ENCODE measurements at regions of chr12 and their contacts with region 1.

Region 1: DNA sequence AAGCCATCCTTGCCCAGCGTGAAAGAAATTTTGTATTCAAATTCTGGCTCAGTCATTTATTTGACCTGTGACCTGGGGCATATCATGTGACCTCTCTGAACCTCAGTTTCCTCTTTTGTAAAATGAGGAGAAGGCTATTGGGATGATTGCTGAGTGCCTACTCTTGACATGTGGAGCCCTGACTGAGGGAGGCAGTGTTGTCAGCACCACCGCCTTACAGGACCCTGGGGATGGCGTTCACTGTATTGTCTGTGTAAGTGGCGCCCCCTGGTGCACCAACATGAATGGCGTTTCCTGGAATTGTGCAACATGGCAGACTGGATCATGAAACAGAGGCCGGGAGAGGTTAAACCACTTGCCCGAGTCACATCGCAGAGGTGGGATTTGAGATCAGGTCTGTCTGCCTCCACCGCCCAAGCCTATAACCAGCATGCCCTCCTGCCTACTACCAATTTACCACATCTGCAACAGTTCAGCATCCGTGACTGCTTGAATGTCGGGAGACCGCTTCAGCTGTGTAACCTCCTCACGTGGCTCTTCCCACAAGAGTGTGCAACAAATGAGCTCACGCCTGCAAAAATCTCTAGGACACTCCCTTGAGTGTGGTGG is 20.1 kb upstream of the CCDC63 start:
- DNase-seq: peak; percentile 96
- ATAC-seq: peak; percentile 98
- H3K4me3 Mint-ChIP-seq: peak overlapping the region; percentile 56
- H3K27ac Mint-ChIP-seq: no peak overlapping the region
- H3K4me1 Mint-ChIP-seq: peaks cover 7% of the 10 kb centered on the region
- H3K27me3 Mint-ChIP-seq: peaks cover 7% of the 10 kb centered on the region
- CTCF ChIP-seq: peak; percentile 92

Region 2: GRCh38 chr12:110513842-110514241 is 312.9 kb before region 1 on chr12:
- CTCF ChIA-PET with region 1: interaction called, 3 read pairs
- POLR2A ChIA-PET with region 1: no interaction called
- intact Hi-C with region 1: loop called (anchors 10 kb)
- DNase-seq: no peak
- ATAC-seq: no peak
- H3K4me3 Mint-ChIP-seq: no peak overlapping the region
- H3K27ac Mint-ChIP-seq: no peak overlapping the region
- H3K4me1 Mint-ChIP-seq: no peaks in the 10 kb centered on the region
- H3K27me3 Mint-ChIP-seq: no peaks in the 10 kb centered on the region
- CTCF ChIP-seq: no peak

Region 3: DNA sequence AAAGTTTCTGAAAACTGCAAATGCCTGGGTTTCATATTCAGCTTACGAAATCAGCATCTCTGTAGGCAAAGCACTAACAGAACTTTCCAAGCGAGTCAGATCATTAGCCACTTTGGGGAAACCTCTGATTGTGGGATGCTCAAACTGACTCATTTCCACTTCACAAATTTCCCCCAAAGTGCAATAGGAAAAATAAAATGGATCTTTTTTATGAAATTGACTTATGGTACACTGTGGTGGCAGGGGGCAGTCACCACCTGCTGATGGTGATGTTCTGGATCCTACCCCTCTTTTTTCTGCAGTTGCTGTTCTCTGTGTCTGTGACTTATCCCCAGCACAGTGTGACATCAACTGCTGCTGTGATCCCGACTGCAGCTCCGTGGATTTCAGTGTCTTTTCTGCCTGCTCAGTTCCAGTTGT is 207.2 kb before region 1 on chr12:
- CTCF ChIA-PET with region 1: interaction called, 10 read pairs
- POLR2A ChIA-PET with region 1: no interaction called
- intact Hi-C with region 1: loop called (anchors 2 kb)
- DNase-seq: peak; percentile 75
- ATAC-seq: peak; percentile 91
- H3K4me3 Mint-ChIP-seq: no peak overlapping the region
- H3K27ac Mint-ChIP-seq: peak overlapping the region; percentile 80
- H3K4me1 Mint-ChIP-seq: peaks cover 21% of the 10 kb centered on the region
- H3K27me3 Mint-ChIP-seq: no peaks in the 10 kb centered on the region
- CTCF ChIP-seq: peak; percentile 43

Region 4: GRCh38 chr12:110731479-110731878 is 95.2 kb before region 1 on chr12:
- CTCF ChIA-PET with region 1: interaction called, 10 read pairs
- POLR2A ChIA-PET with region 1: interaction called, 3 read pairs
- intact Hi-C with region 1: no loop called
- DNase-seq: no peak
- ATAC-seq: no peak
- H3K4me3 Mint-ChIP-seq: no peak overlapping the region
- H3K27ac Mint-ChIP-seq: peak overlapping the region; percentile 52
- H3K4me1 Mint-ChIP-seq: peaks cover 70% of the 10 kb centered on the region
- H3K27me3 Mint-ChIP-seq: no peaks in the 10 kb centered on the region
- CTCF ChIP-seq: no peak

Region 5: GRCh38 chr12:110888256-110888991 is 61.7 kb after region 1 on chr12:
- CTCF ChIA-PET with region 1: interaction called, 12 read pairs
- POLR2A ChIA-PET with region 1: no interaction called
- intact Hi-C with region 1: no loop called
- DNase-seq: no peak
- ATAC-seq: no peak
- H3K4me3 Mint-ChIP-seq: peak overlapping the region; percentile 81
- H3K27ac Mint-ChIP-seq: no peak overlapping the region
- H3K4me1 Mint-ChIP-seq: peaks cover 4% of the 10 kb centered on the region
- H3K27me3 Mint-ChIP-seq: no peaks in the 10 kb centered on the region
- CTCF ChIP-seq: peak; percentile 53

Region 6: GRCh38 chr12:111546758-111547383 is 720.2 kb after region 1 on chr12:
- CTCF ChIA-PET with region 1: no interaction called
- POLR2A ChIA-PET with region 1: no interaction called
- intact Hi-C with region 1: no loop called
- DNase-seq: peak; percentile 51
- ATAC-seq: peak; percentile 85
- H3K4me3 Mint-ChIP-seq: no peak overlapping the region
- H3K27ac Mint-ChIP-seq: peak overlapping the region; percentile 78
- H3K4me1 Mint-ChIP-seq: peaks cover 21% of the 10 kb centered on the region
- H3K27me3 Mint-ChIP-seq: no peaks in the 10 kb centered on the region
- CTCF ChIP-seq: no peak

Measured in activated CD8-positive, alpha-beta T cell treated with anti-CD3 and anti-CD28 coated beads for 36 hours (primary cell).